Esophagus squamous epithelium (tissue), 5 donors: ENCODE measurements at regions of chr17 and their contacts with region 1.

Region 1: GRCh38 chr17:43393944-43394482 is 4.8 kb upstream of the ARL4D start:
- DNase-seq: peak; percentile 25
- H3K4me3 ChIP-seq: peak overlapping the region in 1 of 4 donors; percentile 24
- H3K27ac ChIP-seq: peak overlapping the region; percentile 50 to 98 (median 76)
- H3K4me1 ChIP-seq: peaks cover 26 to 68% (median 32%) of the 10 kb centered on the region in 3 donors
- H3K27me3 ChIP-seq: no peaks in the 10 kb centered on the region
- CTCF ChIP-seq: peak; percentile 83 to 99 (median 96)
- POLR2A ChIP-seq: no peak

Region 2: GRCh38 chr17:43483674-43484372 is 89.8 kb after region 1 on chr17 and contains the start of gene DHX8:
- intact Hi-C with region 1: loop called (anchors 2 kb)
- DNase-seq: peak; percentile 88
- H3K4me3 ChIP-seq: peak within 1 kb of the TSS; percentile 65 to 83 (median 74)
- H3K27ac ChIP-seq: peak within 1 kb of the TSS; percentile 84 to 89 (median 87)
- H3K4me1 ChIP-seq: peaks cover 12 to 43% (median 20%) of the 10 kb centered on the region in 3 donors
- H3K27me3 ChIP-seq: no peaks in the 10 kb centered on the region
- CTCF ChIP-seq: peak; percentile 98 to 100 (median 100)
- POLR2A ChIP-seq: peak in 1 of 4 donors; percentile 65
- total RNA-seq, gene DHX8: 28.1 to 32.3 (median 31.0) TPM